HepG2 (cell line): ENCODE measurements at regions of chr21 and their contacts with region 1.

Region 1: GRCh38 chr21:29002442-29003144 is 9.9 kb upstream of the LTN1 start:
- DNase-seq: peak; percentile 92
- ATAC-seq: peak; percentile 100
- H3K4me3 ChIP-seq: peak overlapping the region; percentile 78 to 92 (median 81)
- H3K27ac ChIP-seq: peak overlapping the region; percentile 92
- H3K4me1 ChIP-seq: peaks cover 17% of the 10 kb centered on the region
- H3K27me3 ChIP-seq: no peaks in the 10 kb centered on the region
- CTCF ChIP-seq: no peak
- EP300 ChIP-seq: 0 out of 4 replicates have a peak, but pooled peaks of 1 of the 2 experiments have one; percentile 4
- POLR2A ChIP-seq: peak; percentile 96 to 97
- RAD21 ChIP-seq: peak; percentile 51; the same call in 1 of the 2 replicates

Region 2: DNA sequence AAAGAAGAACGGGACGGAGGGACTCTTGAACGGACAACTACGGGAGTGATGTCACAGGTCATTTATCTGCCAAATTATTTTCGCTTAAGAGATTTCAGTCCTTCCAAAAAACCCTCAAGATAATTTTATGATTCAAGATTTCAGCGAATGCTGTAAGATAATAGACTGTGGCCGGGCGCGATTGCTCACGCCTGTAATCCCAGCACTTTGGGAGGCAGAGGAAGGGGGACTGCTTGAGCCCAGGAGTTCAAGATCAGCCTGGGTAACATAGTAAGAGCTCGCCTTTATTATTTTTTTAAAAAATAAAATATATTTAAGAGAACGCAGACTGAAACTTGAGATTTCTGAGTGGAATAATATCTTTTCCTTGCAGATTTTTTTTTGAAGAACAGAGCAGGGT is 15.9 kb after region 1 on chr21:
- CTCF ChIA-PET with region 1: no interaction called
- POLR2A ChIA-PET with region 1: interaction called, 94 read pairs
- in situ Hi-C with region 1: no loop called
- intact Hi-C with region 1: no loop called
- DNase-seq: no peak
- ATAC-seq: no peak
- H3K4me3 ChIP-seq: peak overlapping the region; percentile 75 to 100 (median 87)
- H3K27ac ChIP-seq: peak overlapping the region; percentile 81
- H3K4me1 ChIP-seq: peaks cover 39% of the 10 kb centered on the region
- H3K27me3 ChIP-seq: no peaks in the 10 kb centered on the region
- CTCF ChIP-seq: no peak
- EP300 ChIP-seq: no peak
- POLR2A ChIP-seq: no peak
- RAD21 ChIP-seq: no peak

Region 3: GRCh38 chr21:29024474-29025327 is 22.1 kb after region 1 on chr21 and contains the start of gene USP16:
- CTCF ChIA-PET with region 1: no interaction called
- POLR2A ChIA-PET with region 1: interaction called, 94 read pairs
- in situ Hi-C with region 1: no loop called
- intact Hi-C with region 1: loop called (anchors 1 kb)
- DNase-seq: peak; percentile 95
- ATAC-seq: peak; percentile 98
- H3K4me3 ChIP-seq: peak within 1 kb of the TSS; percentile 79 to 94 (median 83)
- H3K27ac ChIP-seq: peak within 1 kb of the TSS; percentile 99
- H3K4me1 ChIP-seq: peaks cover 44% of the 10 kb centered on the region
- H3K27me3 ChIP-seq: no peaks in the 10 kb centered on the region; a peak in 1 of 5 replicates
- CTCF ChIP-seq: no peak
- EP300 ChIP-seq: 0 out of 4 replicates have a peak, but pooled peaks of 1 of the 2 experiments have one; percentile 5
- POLR2A ChIP-seq: peak; percentile 70 to 95
- RAD21 ChIP-seq: no peak; the same call in 1 of the 2 replicates
- total RNA-seq, gene USP16: 46.9 and 72.4 TPM in 2 replicates

Region 4: DNA sequence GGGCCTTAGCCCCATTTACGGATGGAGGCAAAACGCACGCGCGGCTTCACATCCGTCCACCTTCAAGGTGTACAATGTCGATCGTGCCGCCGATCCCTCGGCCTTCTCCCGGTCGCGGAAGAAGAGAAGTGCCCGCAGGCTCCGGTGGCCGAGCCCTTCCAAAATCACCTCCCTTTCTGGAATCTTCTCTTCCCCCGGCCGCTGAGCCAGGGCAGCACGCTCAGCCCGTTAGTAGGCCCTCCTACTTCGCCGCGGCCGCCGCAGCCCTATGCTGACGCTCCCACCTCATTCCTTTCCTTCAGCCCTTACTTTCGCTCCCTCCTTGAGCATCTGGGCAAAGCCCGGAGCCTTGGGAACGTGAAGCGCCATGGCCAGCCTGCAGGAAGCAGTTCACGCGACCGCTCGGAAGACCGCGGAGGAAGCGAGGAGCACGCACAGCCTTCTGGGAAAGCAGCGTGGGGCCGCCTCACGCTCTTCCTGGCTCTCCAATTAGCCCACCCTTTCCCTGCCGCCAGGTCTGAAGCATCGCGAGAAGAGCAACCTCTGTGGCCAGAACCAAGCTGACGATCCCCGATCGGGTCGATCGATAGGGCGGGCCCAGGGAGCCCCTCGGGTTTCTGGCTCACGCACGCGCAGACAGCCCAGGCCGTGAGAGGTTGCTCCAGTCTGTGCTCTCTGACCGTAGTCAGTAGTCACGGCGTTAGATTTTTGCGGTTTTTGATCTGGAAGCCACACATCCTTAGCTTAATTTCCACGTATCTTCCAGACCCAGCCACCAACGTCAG is 70.8 kb after region 1 on chr21 and contains the start of gene CCT8:
- CTCF ChIA-PET with region 1: no interaction called
- POLR2A ChIA-PET with region 1: interaction called, 27 read pairs
- in situ Hi-C with region 1: no loop called
- intact Hi-C with region 1: no loop called
- DNase-seq: peak; percentile 98
- ATAC-seq: peak; percentile 98
- H3K4me3 ChIP-seq: peak within 1 kb of the TSS; percentile 94 to 95 (median 94)
- H3K27ac ChIP-seq: peak within 1 kb of the TSS; percentile 88
- H3K4me1 ChIP-seq: peaks cover 38% of the 10 kb centered on the region
- H3K27me3 ChIP-seq: no peaks in the 10 kb centered on the region; a peak in 1 of 5 replicates
- CTCF ChIP-seq: peak; percentile 11; the same call in 1 of the 2 replicates
- EP300 ChIP-seq: no peak
- POLR2A ChIP-seq: peak; percentile 95 to 97
- RAD21 ChIP-seq: no peak; the same call in 1 of the 2 replicates
- total RNA-seq, gene CCT8: 325 and 538 TPM in 2 replicates